ENCODE measurements at regions of chr14 and their contacts with region 1.

Region 1: GRCh38 chr14:72516936-72517700 is 376.8 kb downstream of the DPF3 start:
- DNase-seq: peak; percentile 81
- H3K4me3 ChIP-seq: no peak overlapping the region
- H3K27ac ChIP-seq: peak overlapping the region in 3 of 8 donors; percentile 74 to 76 (median 74)
- H3K4me1 ChIP-seq: peaks cover 17 to 45% (median 37%) of the 10 kb centered on the region in 6 donors
- H3K27me3 ChIP-seq: no peaks in the 10 kb centered on the region
- CTCF ChIP-seq: peak; percentile 78 to 98 (median 91)
- POLR2A ChIP-seq: no peak

Region 2: DNA sequence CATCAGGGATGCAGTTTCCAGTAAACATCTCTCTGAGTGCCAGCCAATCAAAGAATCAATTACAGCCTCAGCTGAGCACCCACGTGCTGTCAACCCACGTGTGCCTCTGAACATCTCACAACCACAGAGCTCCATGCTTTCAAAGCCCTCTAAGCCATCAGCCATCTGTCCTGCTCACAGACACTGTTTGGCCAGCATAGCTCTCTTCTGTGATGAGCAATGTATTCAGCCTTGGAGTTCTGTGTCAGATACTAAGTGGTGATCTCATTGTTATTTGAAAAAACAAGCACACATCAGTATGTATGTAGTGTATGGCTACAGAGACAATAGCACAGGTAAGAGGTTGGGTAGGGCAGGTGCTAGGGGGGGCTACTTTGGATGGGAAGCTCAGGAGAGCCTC is 490.6 kb before region 1 on chr14:
- intact Hi-C with region 1: no loop called
- DNase-seq: no peak
- H3K4me3 ChIP-seq: no peak overlapping the region
- H3K27ac ChIP-seq: no peak overlapping the region
- H3K4me1 ChIP-seq: peaks cover 0 to 4% (median 0%) of the 10 kb centered on the region in 6 donors
- H3K27me3 ChIP-seq: peaks cover 0 to 21% (median 0%) of the 10 kb centered on the region in 7 donors
- CTCF ChIP-seq: no peak
- POLR2A ChIP-seq: no peak

Region 3: DNA sequence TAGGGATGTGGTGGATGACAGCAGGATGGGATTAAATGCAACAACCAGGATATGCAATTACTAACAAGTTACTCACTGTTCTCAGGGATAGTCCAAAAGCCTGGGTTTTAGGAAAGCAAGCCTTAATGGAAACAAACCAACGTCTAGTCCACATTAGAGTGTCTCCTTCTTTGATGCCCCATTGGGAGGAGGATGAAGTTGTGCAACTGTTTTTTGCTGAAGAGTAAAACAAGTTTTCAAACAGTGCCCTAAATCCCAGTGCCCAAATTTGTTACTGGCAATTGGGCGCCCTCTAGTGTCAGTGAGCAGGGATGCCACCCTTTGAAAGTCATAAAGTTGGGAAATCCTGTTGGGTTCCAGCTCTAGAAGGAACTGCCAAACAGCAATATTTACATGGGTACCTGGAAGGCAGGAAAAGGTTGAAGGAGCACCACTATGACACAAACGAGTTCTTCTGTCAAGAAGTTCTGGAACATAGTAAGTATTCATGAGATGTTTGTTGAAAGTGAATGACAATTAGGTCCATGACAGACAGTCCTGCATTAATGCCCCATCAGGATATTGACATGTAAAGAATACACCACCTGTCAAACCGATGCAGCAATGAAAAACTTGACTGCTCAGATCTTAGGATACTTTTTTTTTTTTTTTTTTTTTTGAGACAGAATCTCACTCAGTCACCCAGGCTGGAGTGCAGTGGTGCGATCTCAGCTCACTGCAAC is 387.9 kb after region 1 on chr14:
- intact Hi-C with region 1: loop called (anchors 2 kb)
- DNase-seq: no peak
- H3K4me3 ChIP-seq: no peak overlapping the region
- H3K27ac ChIP-seq: no peak overlapping the region
- H3K4me1 ChIP-seq: peaks cover 0 to 15% (median 0%) of the 10 kb centered on the region in 6 donors
- H3K27me3 ChIP-seq: peaks cover 0 to 24% (median 0%) of the 10 kb centered on the region in 7 donors
- CTCF ChIP-seq: peak; percentile 81 to 95 (median 91)
- POLR2A ChIP-seq: no peak